ENCODE measurements at regions of chr12 and their contacts with region 1.

Region 1: DNA sequence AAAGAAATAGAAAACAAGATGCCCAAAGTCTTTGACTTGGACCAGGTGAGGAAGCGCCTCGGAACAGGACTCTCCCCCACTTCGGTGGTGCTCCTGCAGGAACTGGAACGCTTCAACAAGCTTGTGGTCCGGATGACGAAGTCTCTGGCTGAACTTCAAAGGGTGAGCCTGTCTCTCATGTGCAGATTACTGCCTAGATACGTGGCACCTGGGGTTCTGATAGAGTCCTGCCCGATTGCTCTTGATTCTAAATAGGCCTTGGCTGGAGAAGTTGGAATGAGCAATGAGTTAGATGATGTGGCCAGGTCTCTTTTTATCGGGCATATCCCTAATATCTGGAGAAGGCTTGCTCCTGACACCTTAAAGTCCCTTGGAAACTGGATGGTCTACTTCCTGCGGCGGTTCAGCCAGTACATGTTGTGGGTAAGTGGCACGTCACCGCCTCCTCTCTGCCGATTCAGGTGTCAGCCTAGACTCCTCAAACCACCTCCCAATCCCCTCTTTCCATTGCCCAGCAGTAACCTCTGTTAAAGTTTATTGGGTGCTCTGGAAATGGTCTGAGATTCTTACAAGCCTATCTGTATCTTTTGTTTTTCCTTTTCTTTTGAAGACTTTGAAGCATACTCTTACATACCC is 40.8 kb downstream of the CCDC92 start:
- DNase-seq: no peak
- H3K4me3 ChIP-seq: no peak overlapping the region
- H3K27ac ChIP-seq: no peak overlapping the region
- H3K4me1 ChIP-seq: no peaks in the 10 kb centered on the region
- H3K27me3 ChIP-seq: peaks cover 0 to 2% (median 0%) of the 10 kb centered on the region in 4 experiments; a peak in 1 of 7 replicates
- CTCF ChIP-seq: peak in 2 of 3 experiments; percentile 30 to 39; a peak in 2 of 4 replicates
- EP300 ChIP-seq: no peak
- POLR2A ChIP-seq: no peak
- RAD21 ChIP-seq: peak; percentile 15 to 30; a peak in 2 of 4 replicates

Region 2: DNA sequence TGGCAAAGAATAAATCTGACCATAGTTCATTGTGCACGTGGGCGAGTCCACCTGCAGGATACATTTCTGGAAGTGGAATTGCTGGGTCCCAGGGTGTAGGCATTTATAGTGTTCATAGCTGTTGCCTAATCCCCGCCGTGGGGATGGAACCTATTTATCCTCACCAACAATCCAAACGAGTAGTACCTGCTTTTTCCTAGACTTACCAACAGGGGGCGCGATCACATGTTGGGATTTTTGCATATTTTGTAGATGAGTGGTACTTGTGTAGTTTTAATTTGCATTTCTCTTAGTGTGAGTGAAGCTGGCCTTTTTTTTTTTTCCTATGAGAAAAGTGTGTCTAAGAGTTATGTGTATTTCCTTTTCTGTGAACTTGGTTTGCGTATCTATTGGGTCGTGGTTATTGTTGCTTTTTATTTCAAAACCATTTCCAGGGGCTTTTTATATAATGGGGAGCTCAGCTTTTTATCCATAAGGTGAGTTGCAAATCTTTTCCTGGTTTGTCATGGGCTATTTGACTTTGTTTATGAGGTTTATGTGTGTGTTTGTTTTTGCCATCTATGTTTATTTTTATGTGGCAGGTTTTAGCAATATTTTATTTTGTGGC is 26.4 kb before region 1 on chr12:
- CTCF ChIA-PET with region 1: interaction called, 26 read pairs
- POLR2A ChIA-PET with region 1: no interaction called
- DNase-seq: peak in 1 of 2 experiments; percentile 68
- H3K4me3 ChIP-seq: no peak overlapping the region
- H3K27ac ChIP-seq: no peak overlapping the region
- H3K4me1 ChIP-seq: peaks cover 0 to 7% (median 4%) of the 10 kb centered on the region in 4 experiments; a peak in 3 of 7 replicates
- H3K27me3 ChIP-seq: no peaks in the 10 kb centered on the region
- CTCF ChIP-seq: peak; percentile 1 to 76 (median 59)
- EP300 ChIP-seq: no peak
- POLR2A ChIP-seq: no peak
- RAD21 ChIP-seq: peak; percentile 40 to 46; a peak in 3 of 4 replicates

Region 3: GRCh38 chr12:123912415-123913380 is 19.1 kb before region 1 on chr12:
- CTCF ChIA-PET with region 1: interaction called, 18 read pairs
- POLR2A ChIA-PET with region 1: no interaction called
- DNase-seq: no peak
- H3K4me3 ChIP-seq: no peak overlapping the region
- H3K27ac ChIP-seq: no peak overlapping the region
- H3K4me1 ChIP-seq: peaks cover 0 to 8% (median 0%) of the 10 kb centered on the region in 4 experiments; a peak in 2 of 7 replicates
- H3K27me3 ChIP-seq: 0 out of 7 replicates have a peak, but pooled peaks cover 0 to 3% (median 0%) of the 10 kb centered on the region in 4 experiments
- CTCF ChIP-seq: no peak
- EP300 ChIP-seq: no peak
- POLR2A ChIP-seq: no peak
- RAD21 ChIP-seq: no peak

Measured in H1 (cell line).